ENCODE measurements at regions of chr1 and their contacts with region 1.

Region 1: DNA sequence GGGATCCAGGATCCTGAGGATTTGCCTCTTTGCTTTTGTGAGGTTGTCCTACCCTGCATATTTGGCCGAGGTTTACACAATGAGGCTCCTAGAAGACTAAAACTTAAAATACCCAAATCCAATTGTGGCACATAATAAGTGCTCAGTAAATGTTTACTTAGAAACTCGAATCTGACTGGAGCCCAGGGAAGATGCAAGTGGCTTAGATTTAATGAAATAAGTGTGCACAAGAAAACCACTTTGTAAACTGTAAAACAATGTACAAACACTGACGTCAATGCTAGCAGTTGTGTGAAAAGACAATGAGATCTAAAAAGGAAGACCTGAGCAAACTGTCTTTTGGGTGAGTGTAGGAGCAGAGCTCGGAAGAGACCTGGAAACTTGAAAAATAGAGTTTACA is 71.5 kb downstream of the KCND3 start:
- DNase-seq: no peak
- ATAC-seq: no peak

Region 2: DNA sequence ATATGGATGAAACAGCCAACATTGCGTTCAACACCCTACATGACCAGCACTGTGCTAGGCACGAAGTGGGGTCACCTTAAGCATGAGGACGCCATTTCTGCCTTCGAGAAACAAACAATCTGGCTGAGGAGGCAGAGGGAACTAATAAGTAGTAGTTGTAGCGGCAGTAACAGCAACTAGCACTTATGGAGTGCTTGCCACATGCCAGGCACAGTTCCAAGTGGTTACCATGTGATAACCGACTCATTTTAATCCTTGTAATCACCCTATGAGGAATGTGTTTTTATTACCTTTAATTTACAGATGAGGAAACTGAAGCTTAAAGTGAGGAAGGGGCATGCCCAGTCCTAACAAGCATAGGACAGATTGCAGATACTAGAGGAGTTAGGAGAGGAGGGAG is 37.8 kb after region 1 on chr1:
- intact Hi-C with region 1: loop called (anchors 5 kb)
- DNase-seq: no peak
- ATAC-seq: no peak

Region 3: GRCh38 chr1:112011215-112011614 is 93.3 kb after region 1 on chr1:
- intact Hi-C with region 1: no loop called
- DNase-seq: no peak
- ATAC-seq: peak; percentile 48